ENCODE measurements at regions of chr1 and their contacts with region 1.

Region 1: GRCh38 chr1:186202271-186202764 is 172.7 kb downstream of the TPR start:
- DNase-seq: no peak
- H3K4me3 ChIP-seq: no peak overlapping the region
- H3K27ac ChIP-seq: no peak overlapping the region
- H3K4me1 ChIP-seq: no peaks in the 10 kb centered on the region
- H3K27me3 ChIP-seq: no peaks in the 10 kb centered on the region
- CTCF ChIP-seq: no peak
- POLR2A ChIP-seq: no peak

Region 2: GRCh38 chr1:186152620-186153361 is 49.5 kb before region 1 on chr1:
- intact Hi-C with region 1: loop called (anchors 5 kb)
- DNase-seq: peak; percentile 27
- H3K4me3 ChIP-seq: no peak overlapping the region
- H3K27ac ChIP-seq: no peak overlapping the region
- H3K4me1 ChIP-seq: no peaks in the 10 kb centered on the region
- H3K27me3 ChIP-seq: no peaks in the 10 kb centered on the region
- CTCF ChIP-seq: no peak
- POLR2A ChIP-seq: no peak

Region 3: GRCh38 chr1:186165303-186165702 is 37.0 kb before region 1 on chr1:
- intact Hi-C with region 1: no loop called
- DNase-seq: no peak
- H3K4me3 ChIP-seq: no peak overlapping the region
- H3K27ac ChIP-seq: no peak overlapping the region
- H3K4me1 ChIP-seq: no peaks in the 10 kb centered on the region
- H3K27me3 ChIP-seq: no peaks in the 10 kb centered on the region
- CTCF ChIP-seq: no peak
- POLR2A ChIP-seq: no peak